ENCODE measurements at regions of chr12 and their contacts with region 1.

Region 1: GRCh38 chr12:99977550-99977949 is 7.2 kb downstream of the ANKS1B start:
- DNase-seq: no peak
- H3K4me3 ChIP-seq: no peak overlapping the region
- H3K27ac ChIP-seq: no peak overlapping the region
- H3K4me1 ChIP-seq: no peaks in the 10 kb centered on the region
- H3K27me3 ChIP-seq: peaks cover 13% of the 10 kb centered on the region; the same call in 1 of the 2 replicates
- CTCF ChIP-seq: no peak

Region 2: GRCh38 chr12:99997806-99998205 is 20.3 kb after region 1 on chr12:
- CTCF ChIA-PET with region 1: no interaction called
- POLR2A ChIA-PET with region 1: interaction called, 10 read pairs
- intact Hi-C with region 1: no loop called
- DNase-seq: no peak
- H3K4me3 ChIP-seq: no peak overlapping the region
- H3K27ac ChIP-seq: no peak overlapping the region
- H3K4me1 ChIP-seq: no peaks in the 10 kb centered on the region
- H3K27me3 ChIP-seq: peaks cover 9% of the 10 kb centered on the region; the same call in 1 of the 2 replicates
- CTCF ChIP-seq: no peak

Region 3: GRCh38 chr12:100058482-100059029 is 81.0 kb after region 1 on chr12:
- CTCF ChIA-PET with region 1: no interaction called
- POLR2A ChIA-PET with region 1: no interaction called
- intact Hi-C with region 1: no loop called
- DNase-seq: peak in 1 of 2 experiments; percentile 56
- H3K4me3 ChIP-seq: no peak overlapping the region
- H3K27ac ChIP-seq: no peak overlapping the region
- H3K4me1 ChIP-seq: no peaks in the 10 kb centered on the region
- H3K27me3 ChIP-seq: no peaks in the 10 kb centered on the region
- CTCF ChIP-seq: no peak